ENCODE measurements at regions of chr5 and their contacts with region 1.

Region 1: DNA sequence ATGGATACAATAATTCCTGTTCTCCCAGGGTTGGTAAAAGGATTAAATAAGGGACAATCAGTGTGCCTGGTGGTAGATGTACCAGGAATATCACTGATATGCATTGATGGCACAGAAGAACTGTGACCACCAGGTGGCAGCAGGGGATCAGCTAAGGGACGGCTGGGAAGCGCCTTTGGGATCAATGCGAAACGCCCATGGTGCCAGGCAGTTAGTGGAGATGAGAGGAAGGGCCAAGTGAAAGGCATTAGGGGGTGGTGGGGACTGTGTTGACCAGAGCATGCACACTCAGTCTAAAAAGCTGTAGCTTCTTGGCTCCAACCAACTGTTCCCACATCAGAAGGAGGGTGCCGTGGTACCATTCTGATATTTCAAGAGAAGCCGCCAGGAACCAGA is 55.6 kb downstream of the ARHGEF37 start:
- DNase-seq: no peak
- H3K4me3 ChIP-seq: no peak overlapping the region
- H3K27ac ChIP-seq: no peak overlapping the region
- H3K4me1 ChIP-seq: peaks cover 0 to 22% (median 13%) of the 10 kb centered on the region in 4 donors
- H3K27me3 ChIP-seq: no peaks in the 10 kb centered on the region
- CTCF ChIP-seq: peak; percentile 68 to 89 (median 72)
- EP300 ChIP-seq: no peak
- POLR2A ChIP-seq: no peak

Region 2: DNA sequence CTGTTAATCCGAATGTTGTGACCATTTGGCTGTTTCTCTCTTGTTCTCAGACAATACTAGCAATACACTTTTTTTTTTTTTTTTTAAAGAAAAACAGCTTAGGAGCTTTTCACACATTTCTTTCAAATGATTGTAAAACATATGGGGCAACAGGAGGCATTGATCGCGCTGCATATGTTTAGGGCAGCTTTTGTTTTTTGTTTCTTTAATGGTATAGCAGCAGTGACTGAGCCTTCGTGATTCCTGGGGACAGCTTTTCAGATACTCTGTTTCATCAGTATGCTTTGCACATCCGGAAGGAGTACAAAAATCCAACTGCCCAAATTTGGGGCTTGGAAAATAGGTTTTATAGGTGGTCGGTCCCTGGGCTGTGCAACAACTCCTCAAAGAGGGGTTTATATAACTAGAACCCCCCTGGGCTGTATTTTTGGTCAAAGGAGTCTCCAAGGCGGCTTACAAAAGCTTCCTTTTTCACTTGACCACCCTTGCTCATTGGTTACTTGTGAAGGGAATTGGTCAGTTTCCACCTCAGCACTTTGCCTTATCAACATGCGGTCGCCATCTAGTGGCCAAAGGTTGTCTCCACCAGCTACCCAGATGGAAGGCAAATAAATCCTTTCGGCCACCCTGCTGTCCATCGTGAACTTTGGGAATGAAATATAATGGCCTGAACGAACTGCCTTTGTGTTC is 215.9 kb after region 1 on chr5:
- intact Hi-C with region 1: loop called (anchors 2 kb)
- DNase-seq: peak; percentile 95
- H3K4me3 ChIP-seq: no peak overlapping the region
- H3K27ac ChIP-seq: peak overlapping the region in 2 of 4 donors; percentile 27 to 45
- H3K4me1 ChIP-seq: peaks cover 20 to 23% (median 21%) of the 10 kb centered on the region in 4 donors
- H3K27me3 ChIP-seq: no peaks in the 10 kb centered on the region
- CTCF ChIP-seq: peak; percentile 89 to 93 (median 92)
- EP300 ChIP-seq: no peak
- POLR2A ChIP-seq: no peak

Measured in esophagus muscularis mucosa (tissue), 4 donors.